ENCODE measurements at regions of chr17 and their contacts with region 1.

Region 1: DNA sequence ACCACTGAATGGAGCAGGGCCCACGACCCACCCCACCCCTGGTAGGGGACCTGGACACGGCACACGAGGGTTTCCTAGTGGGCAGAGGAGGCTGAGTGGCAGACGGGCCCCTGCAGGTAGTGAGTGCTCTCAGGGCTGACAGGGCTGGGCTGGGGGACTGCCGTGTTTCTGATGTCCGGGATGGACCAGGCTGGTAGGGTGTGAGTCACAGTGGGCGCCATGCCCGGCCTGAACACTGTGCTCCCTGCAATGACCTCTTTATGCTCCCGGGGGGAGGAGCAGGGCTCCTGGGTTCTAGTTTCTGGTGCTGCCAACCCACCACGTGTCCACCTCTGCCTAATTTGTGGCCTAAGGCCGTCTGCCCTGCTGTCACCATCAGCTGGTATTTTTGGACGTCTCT is 26.3 kb downstream of the ARHGAP23 start:
- DNase-seq: no peak
- H3K4me3 ChIP-seq: peak overlapping the region; percentile 39 to 57 (median 42); a peak in 6 of 8 replicates
- H3K27ac ChIP-seq: no peak overlapping the region; the same call in 1 of the 2 replicates
- H3K4me1 ChIP-seq: peaks cover 29 to 61% (median 51%) of the 10 kb centered on the region in 4 experiments
- H3K27me3 ChIP-seq: no peaks in the 10 kb centered on the region
- CTCF ChIP-seq: no peak
- EP300 ChIP-seq: no peak
- POLR2A ChIP-seq: no peak; a peak in 1 of 3 replicates
- RAD21 ChIP-seq: no peak

Region 2: GRCh38 chr17:38341035-38341721 is 113.3 kb before region 1 on chr17:
- CTCF ChIA-PET with region 1: no interaction called
- POLR2A ChIA-PET with region 1: no interaction called
- DNase-seq: peak in 1 of 2 experiments; percentile 17
- H3K4me3 ChIP-seq: no peak overlapping the region
- H3K27ac ChIP-seq: no peak overlapping the region
- H3K4me1 ChIP-seq: peaks cover 0 to 9% (median 3%) of the 10 kb centered on the region in 4 experiments; a peak in 3 of 7 replicates
- H3K27me3 ChIP-seq: no peaks in the 10 kb centered on the region
- CTCF ChIP-seq: no peak
- EP300 ChIP-seq: no peak
- POLR2A ChIP-seq: no peak
- RAD21 ChIP-seq: no peak

Region 3: DNA sequence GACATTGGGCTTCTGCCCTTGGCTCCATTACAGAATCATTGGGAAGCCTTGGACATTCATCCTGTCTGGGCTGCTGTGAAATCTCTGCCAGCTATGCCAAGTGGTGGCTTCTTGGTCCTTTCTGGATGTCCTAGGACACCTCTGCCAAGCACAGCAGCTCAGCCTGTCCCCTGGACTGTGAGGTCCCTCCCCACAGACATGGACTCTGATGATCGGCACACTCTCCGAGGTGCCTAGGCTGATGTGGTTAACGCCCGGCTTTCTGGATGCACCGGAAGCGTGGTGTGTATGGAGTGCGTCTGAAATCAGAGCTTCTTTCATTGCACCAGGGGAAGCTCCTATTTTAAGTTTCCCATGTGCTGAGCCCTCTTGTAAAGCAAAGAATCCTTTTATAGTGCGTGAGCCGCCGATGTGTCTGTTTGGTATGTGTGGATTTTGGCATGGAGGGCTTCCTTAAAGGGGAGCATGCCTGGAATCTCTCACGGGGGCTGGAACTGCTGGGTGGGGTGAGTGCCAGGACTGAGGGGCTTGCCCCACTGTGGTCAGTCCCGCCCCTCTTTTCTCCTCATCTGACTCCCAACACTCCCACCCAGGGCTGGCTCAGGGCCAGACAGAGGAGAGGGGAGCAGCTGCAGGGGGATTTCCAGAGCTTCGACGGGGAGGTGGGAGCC is 33.2 kb before region 1 on chr17:
- CTCF ChIA-PET with region 1: interaction called, 167 read pairs
- POLR2A ChIA-PET with region 1: interaction called, 72 read pairs
- DNase-seq: no peak
- H3K4me3 ChIP-seq: peak overlapping the region in 1 of 4 experiments; percentile 4; a peak in 2 of 8 replicates
- H3K27ac ChIP-seq: no peak overlapping the region
- H3K4me1 ChIP-seq: peaks cover 21 to 64% (median 52%) of the 10 kb centered on the region in 4 experiments
- H3K27me3 ChIP-seq: peaks cover 0 to 19% (median 7%) of the 10 kb centered on the region in 4 experiments; a peak in 4 of 7 replicates
- CTCF ChIP-seq: no peak
- EP300 ChIP-seq: no peak
- POLR2A ChIP-seq: no peak
- RAD21 ChIP-seq: no peak

Region 4: DNA sequence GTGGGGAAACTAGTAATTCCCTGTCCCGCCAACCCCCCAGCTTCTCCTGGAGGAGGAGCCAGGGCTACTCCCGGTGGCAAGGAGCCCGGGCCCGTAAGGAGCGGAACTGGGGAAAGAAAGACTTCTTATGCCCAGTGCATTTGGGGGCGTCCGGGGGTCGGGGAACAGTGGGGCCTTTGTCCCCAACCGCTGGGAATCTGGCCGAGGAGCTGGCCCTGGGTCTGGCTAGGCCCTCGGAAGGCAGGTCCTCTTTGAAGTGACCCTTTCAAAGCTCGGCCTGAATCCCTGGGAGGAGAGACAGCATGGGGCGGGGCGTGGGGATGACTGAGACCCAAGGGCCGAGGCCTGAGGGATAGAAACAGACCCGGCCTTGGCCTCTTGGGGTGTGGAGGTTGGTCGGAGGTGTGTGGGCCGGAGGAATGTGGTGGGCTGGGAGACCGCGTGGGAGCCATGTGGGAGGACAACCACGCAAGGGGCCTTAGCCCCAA is 20.3 kb before region 1 on chr17:
- CTCF ChIA-PET with region 1: interaction called, 167 read pairs
- POLR2A ChIA-PET with region 1: interaction called, 107 read pairs
- DNase-seq: no peak
- H3K4me3 ChIP-seq: no peak overlapping the region
- H3K27ac ChIP-seq: no peak overlapping the region
- H3K4me1 ChIP-seq: peaks cover 9 to 23% (median 14%) of the 10 kb centered on the region in 4 experiments
- H3K27me3 ChIP-seq: no peaks in the 10 kb centered on the region
- CTCF ChIP-seq: no peak
- EP300 ChIP-seq: no peak
- POLR2A ChIP-seq: no peak
- RAD21 ChIP-seq: no peak

Region 5: DNA sequence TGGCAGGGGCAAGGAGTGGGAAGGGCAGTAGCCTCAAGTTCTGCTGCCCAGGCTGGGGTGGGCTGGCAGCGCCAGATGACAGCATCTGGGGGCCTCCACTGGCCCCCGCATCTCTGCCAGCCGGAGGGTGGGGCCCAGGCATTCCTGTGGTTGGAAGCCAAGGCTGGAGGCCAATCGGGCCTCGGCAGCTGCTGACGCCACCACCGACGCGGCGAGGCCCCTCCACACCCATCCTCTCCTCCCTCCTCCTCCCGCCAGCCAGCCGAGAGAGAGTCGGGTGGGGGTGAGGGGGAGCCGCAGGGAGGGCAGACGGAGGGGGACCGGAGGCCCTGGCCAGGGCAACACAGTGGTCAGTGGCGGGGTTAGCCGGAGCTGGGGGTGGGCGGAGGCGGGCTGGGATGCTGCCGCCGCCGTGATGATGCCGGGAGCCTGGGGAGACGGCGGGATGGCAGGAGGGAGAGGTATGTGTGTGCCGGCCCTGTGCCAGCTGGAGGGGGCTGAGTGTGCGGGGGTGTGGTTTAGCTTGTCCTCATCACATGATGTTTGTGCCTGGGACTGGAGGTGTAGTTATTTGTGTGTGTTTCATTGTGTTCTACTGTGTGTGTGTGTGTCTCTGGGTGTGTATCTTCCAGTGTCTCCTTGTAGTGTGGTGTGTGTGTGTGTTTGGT is 10.3 kb after region 1 on chr17:
- CTCF ChIA-PET with region 1: interaction called, 10 read pairs
- POLR2A ChIA-PET with region 1: interaction called, 30 read pairs
- DNase-seq: no peak
- H3K4me3 ChIP-seq: no peak overlapping the region
- H3K27ac ChIP-seq: peak overlapping the region; percentile 54
- H3K4me1 ChIP-seq: peaks cover 0 to 8% (median 1%) of the 10 kb centered on the region in 4 experiments; a peak in 4 of 7 replicates
- H3K27me3 ChIP-seq: no peaks in the 10 kb centered on the region
- CTCF ChIP-seq: no peak
- EP300 ChIP-seq: no peak
- POLR2A ChIP-seq: no peak
- RAD21 ChIP-seq: no peak

Region 6: GRCh38 chr17:38485146-38485468 is 30.6 kb after region 1 on chr17:
- CTCF ChIA-PET with region 1: interaction called, 15 read pairs
- POLR2A ChIA-PET with region 1: interaction called, 5 read pairs
- DNase-seq: no peak
- H3K4me3 ChIP-seq: no peak overlapping the region
- H3K27ac ChIP-seq: no peak overlapping the region
- H3K4me1 ChIP-seq: peaks cover 0 to 6% (median 4%) of the 10 kb centered on the region in 4 experiments; a peak in 3 of 7 replicates
- H3K27me3 ChIP-seq: no peaks in the 10 kb centered on the region
- CTCF ChIP-seq: no peak
- EP300 ChIP-seq: no peak
- POLR2A ChIP-seq: no peak
- RAD21 ChIP-seq: no peak

Measured in H1 (cell line).